ENCODE measurements at regions of chr10 and their contacts with region 1.

Region 1: GRCh38 chr10:131442271-131442670 is 130.8 kb upstream of the TCERG1L start:
- DNase-seq: no peak
- ATAC-seq: no peak
- H3K4me3 ChIP-seq: no peak overlapping the region
- H3K4me3 Mint-ChIP-seq: no peak overlapping the region
- H3K27ac ChIP-seq: no peak overlapping the region
- H3K27ac Mint-ChIP-seq: no peak overlapping the region
- H3K4me1 ChIP-seq: no peaks in the 10 kb centered on the region
- H3K4me1 Mint-ChIP-seq: no peaks in the 10 kb centered on the region
- H3K27me3 ChIP-seq: peaks cover 0 to 30% of the 10 kb centered on the region in 2 experiments
- H3K27me3 Mint-ChIP-seq: peaks cover 13 to 19% of the 10 kb centered on the region in 2 donors

Region 2: DNA sequence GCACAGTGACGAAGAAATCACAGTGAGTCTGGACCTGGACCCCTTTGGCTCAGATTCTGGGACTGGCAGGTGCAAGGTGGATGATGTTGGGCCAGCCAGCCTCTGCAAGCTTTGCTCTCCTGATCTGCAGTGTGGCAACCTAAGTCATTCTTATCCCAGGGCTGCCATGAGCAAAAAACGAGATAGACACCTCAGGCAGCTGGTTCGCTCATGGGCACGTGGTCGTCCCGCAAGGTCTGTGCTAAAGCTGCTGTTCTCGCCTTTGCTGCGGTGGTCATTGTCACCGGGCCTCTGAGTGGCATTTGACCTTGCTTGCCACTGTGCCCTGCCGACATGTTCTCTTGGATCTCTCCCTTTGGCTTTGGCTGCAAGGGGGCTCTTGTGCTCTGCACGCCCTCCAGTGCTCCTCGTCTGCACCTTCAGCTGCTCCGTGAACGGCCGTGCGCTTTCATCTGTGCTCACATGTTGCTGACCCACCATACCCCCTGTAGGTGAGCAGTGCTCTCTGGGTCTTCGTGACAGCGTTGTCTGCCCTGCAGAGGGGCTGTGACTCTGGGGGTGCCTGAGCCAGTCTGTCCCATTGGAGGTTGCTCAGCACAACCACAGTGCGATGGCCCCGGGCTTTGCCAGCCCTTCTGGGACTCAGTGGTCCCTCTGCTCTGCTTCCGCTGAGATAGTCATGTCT is 989.1 kb before region 1 on chr10:
- CTCF ChIA-PET with region 1: no interaction called
- POLR2A ChIA-PET with region 1: no interaction called
- DNase-seq: no peak
- ATAC-seq: no peak
- H3K4me3 ChIP-seq: no peak overlapping the region
- H3K4me3 Mint-ChIP-seq: no peak overlapping the region
- H3K27ac ChIP-seq: no peak overlapping the region
- H3K27ac Mint-ChIP-seq: no peak overlapping the region
- H3K4me1 ChIP-seq: no peaks in the 10 kb centered on the region
- H3K4me1 Mint-ChIP-seq: no peaks in the 10 kb centered on the region
- H3K27me3 ChIP-seq: peaks cover 0 to 23% of the 10 kb centered on the region in 2 experiments
- H3K27me3 Mint-ChIP-seq: peaks cover 2 to 24% of the 10 kb centered on the region in 2 donors

Region 3: GRCh38 chr10:131418676-131419075 is 23.6 kb before region 1 on chr10:
- CTCF ChIA-PET with region 1: interaction called in 1 of 2 experiments, 13 read pairs
- POLR2A ChIA-PET with region 1: no interaction called
- DNase-seq: no peak
- ATAC-seq: no peak
- H3K4me3 ChIP-seq: no peak overlapping the region
- H3K4me3 Mint-ChIP-seq: no peak overlapping the region
- H3K27ac ChIP-seq: no peak overlapping the region
- H3K27ac Mint-ChIP-seq: no peak overlapping the region
- H3K4me1 ChIP-seq: no peaks in the 10 kb centered on the region
- H3K4me1 Mint-ChIP-seq: no peaks in the 10 kb centered on the region
- H3K27me3 ChIP-seq: no peaks in the 10 kb centered on the region
- H3K27me3 Mint-ChIP-seq: no peaks in the 10 kb centered on the region